Caco-2 (cell line): ENCODE measurements at regions of chr7 and their contacts with region 1.

Region 1: GRCh38 chr7:135645296-135645904 is 16.9 kb upstream of the STMP1 start:
- DNase-seq: peak in 1 of 2 experiments; percentile 37
- H3K4me3 ChIP-seq: no peak overlapping the region
- H3K4me3 Mint-ChIP-seq: no peak overlapping the region
- H3K27ac Mint-ChIP-seq: no peak overlapping the region
- H3K4me1 ChIP-seq: no peaks in the 10 kb centered on the region
- H3K4me1 Mint-ChIP-seq: no peaks in the 10 kb centered on the region
- H3K27me3 ChIP-seq: no peaks in the 10 kb centered on the region
- H3K27me3 Mint-ChIP-seq: no peaks in the 10 kb centered on the region
- CTCF ChIP-seq: peak; percentile 64 to 73

Region 2: GRCh38 chr7:135274495-135275268 is 370.7 kb before region 1 on chr7:
- CTCF ChIA-PET with region 1: interaction called, 11 read pairs
- POLR2A ChIA-PET with region 1: no interaction called
- intact Hi-C with region 1: no loop called
- DNase-seq: peak; percentile 56 to 78
- H3K4me3 ChIP-seq: no peak overlapping the region
- H3K4me3 Mint-ChIP-seq: no peak overlapping the region
- H3K27ac Mint-ChIP-seq: no peak overlapping the region
- H3K4me1 ChIP-seq: no peaks in the 10 kb centered on the region
- H3K4me1 Mint-ChIP-seq: no peaks in the 10 kb centered on the region
- H3K27me3 ChIP-seq: no peaks in the 10 kb centered on the region
- H3K27me3 Mint-ChIP-seq: no peaks in the 10 kb centered on the region
- CTCF ChIP-seq: peak; percentile 65 to 92

Region 3: GRCh38 chr7:135493362-135493761 is 152.0 kb before region 1 on chr7:
- CTCF ChIA-PET with region 1: interaction called, 10 read pairs
- POLR2A ChIA-PET with region 1: no interaction called
- intact Hi-C with region 1: no loop called
- DNase-seq: no peak
- H3K4me3 ChIP-seq: no peak overlapping the region
- H3K4me3 Mint-ChIP-seq: no peak overlapping the region
- H3K27ac Mint-ChIP-seq: no peak overlapping the region
- H3K4me1 ChIP-seq: no peaks in the 10 kb centered on the region
- H3K4me1 Mint-ChIP-seq: peaks cover 6% of the 10 kb centered on the region
- H3K27me3 ChIP-seq: no peaks in the 10 kb centered on the region
- H3K27me3 Mint-ChIP-seq: no peaks in the 10 kb centered on the region
- CTCF ChIP-seq: no peak

Region 4: DNA sequence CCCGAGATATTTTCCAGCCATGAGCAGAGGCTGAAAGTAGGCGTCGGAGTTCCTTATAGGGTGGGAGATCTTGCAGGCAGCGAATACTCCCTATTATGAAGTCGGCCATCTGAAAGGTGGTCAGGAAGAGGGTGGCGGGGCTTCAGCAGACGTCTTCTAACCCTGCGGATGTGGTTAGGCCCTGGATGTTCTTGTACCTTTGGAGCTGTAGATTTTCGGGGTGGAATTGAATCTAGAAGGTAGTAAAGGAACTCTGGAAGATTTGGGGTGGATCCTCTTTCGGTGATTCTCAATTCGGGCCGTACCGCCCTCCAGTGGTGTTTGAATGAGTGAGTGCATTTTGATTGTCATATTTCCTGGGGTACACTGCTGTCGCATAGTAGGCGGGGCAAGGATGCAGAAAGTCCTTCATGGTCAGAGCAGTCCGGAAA is 87.0 kb before region 1 on chr7:
- CTCF ChIA-PET with region 1: no interaction called
- POLR2A ChIA-PET with region 1: no interaction called
- intact Hi-C with region 1: no loop called
- DNase-seq: peak; percentile 72 to 74
- H3K4me3 ChIP-seq: peak overlapping the region; percentile 82
- H3K4me3 Mint-ChIP-seq: no peak overlapping the region
- H3K27ac Mint-ChIP-seq: no peak overlapping the region
- H3K4me1 ChIP-seq: peaks cover 28% of the 10 kb centered on the region
- H3K4me1 Mint-ChIP-seq: peaks cover 7% of the 10 kb centered on the region
- H3K27me3 ChIP-seq: no peaks in the 10 kb centered on the region
- H3K27me3 Mint-ChIP-seq: peaks cover 4% of the 10 kb centered on the region
- CTCF ChIP-seq: peak; percentile 45 to 51

Region 5: DNA sequence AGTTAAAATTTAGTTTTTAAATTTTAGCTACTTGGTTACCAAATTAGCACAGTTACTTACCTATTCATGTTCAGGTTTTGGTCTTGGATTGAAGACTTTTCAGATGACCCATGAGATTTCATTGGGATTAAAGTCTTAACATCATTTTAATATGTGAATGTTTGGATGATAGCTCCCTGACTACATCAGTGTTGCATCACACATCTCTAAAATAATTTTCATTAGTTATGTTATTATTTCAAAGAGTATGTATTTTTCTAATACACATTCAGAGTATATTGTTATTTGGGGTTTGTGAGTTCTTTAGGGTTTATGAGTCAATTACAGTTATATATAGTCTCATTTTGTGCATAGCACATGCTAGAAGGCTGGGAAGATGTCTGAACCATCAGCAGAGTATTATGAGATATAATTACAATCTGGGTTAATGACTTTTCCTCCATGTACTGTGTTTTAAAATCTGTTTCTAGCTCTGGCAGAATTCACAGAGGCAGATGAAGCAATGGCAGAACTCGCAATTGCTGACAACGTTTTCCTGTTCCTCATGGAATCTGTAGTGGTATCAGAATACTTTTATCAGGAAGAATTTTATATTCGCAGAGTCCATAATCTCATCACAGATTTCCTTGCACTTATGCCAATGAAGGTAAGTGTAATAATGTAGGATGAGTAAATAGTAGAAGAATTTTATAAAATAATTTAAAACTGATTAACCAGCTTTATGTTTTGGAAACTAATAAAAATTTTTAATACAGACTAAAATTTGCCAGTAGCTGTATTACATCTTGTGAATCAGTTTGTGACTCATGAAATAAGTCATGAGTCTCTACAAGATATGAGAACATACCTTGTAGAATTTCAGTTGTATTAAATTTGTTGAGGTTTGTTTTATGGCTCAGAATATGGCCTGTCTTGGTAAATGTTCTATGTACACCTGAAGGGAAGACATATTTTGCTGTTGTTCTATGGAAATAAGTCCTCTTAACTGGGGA is 60.7 kb before region 1 on chr7:
- CTCF ChIA-PET with region 1: no interaction called
- POLR2A ChIA-PET with region 1: no interaction called
- intact Hi-C with region 1: no loop called
- DNase-seq: no peak
- H3K4me3 ChIP-seq: no peak overlapping the region
- H3K4me3 Mint-ChIP-seq: no peak overlapping the region
- H3K27ac Mint-ChIP-seq: no peak overlapping the region
- H3K4me1 ChIP-seq: no peaks in the 10 kb centered on the region
- H3K4me1 Mint-ChIP-seq: no peaks in the 10 kb centered on the region
- H3K27me3 ChIP-seq: no peaks in the 10 kb centered on the region
- H3K27me3 Mint-ChIP-seq: no peaks in the 10 kb centered on the region
- CTCF ChIP-seq: no peak

Region 6: DNA sequence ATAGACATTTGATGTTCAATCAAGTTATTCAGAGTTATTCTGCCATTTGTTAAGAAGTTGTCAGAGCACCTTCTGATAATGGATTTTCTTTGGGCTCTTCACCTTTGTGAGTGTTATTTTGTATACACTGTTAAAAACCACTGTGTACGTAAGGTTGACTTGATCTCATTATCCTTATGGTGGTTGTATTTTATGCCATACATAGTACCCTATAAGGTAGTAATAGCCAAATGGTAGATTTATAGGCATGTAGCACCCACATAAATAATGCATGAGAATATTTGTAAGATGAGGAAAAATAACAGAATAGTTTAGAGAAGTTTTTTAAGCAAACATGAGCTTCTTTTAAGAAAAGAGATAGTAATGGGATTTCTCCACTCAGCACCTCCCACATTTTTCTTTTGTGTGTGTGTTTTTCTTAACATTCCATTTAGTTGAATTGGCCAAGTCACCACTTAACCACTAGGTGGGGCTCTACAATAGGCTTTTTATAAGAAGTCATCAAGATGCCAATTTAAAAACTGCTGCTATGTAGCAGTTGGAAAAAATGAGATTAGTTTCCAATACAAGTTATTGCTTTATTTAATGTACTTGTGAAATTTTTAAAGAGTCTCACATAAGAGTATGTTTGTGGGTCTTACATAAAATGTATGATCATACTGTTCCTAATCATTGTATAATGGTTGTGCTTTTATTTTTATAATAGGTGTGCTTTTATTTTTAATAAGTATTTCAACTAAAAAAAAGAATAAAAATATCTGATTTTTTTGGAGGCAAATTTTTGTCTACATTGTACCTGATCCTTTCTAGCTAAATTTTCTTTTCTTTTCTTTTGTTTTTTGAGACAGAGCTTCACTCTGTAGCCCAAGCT is 24.2 kb before region 1 on chr7:
- CTCF ChIA-PET with region 1: interaction called, 10 read pairs
- POLR2A ChIA-PET with region 1: no interaction called
- intact Hi-C with region 1: loop called (anchors 1 kb)
- DNase-seq: peak; percentile 48 to 63
- H3K4me3 ChIP-seq: no peak overlapping the region
- H3K4me3 Mint-ChIP-seq: no peak overlapping the region
- H3K27ac Mint-ChIP-seq: no peak overlapping the region
- H3K4me1 ChIP-seq: no peaks in the 10 kb centered on the region
- H3K4me1 Mint-ChIP-seq: no peaks in the 10 kb centered on the region
- H3K27me3 ChIP-seq: no peaks in the 10 kb centered on the region
- H3K27me3 Mint-ChIP-seq: no peaks in the 10 kb centered on the region
- CTCF ChIP-seq: peak; percentile 78 to 82

Region 7: GRCh38 chr7:135672560-135673359 is 27.4 kb after region 1 on chr7:
- CTCF ChIA-PET with region 1: no interaction called
- POLR2A ChIA-PET with region 1: no interaction called
- intact Hi-C with region 1: no loop called
- DNase-seq: peak in 1 of 2 experiments; percentile 41
- H3K4me3 ChIP-seq: no peak overlapping the region
- H3K4me3 Mint-ChIP-seq: no peak overlapping the region
- H3K27ac Mint-ChIP-seq: no peak overlapping the region
- H3K4me1 ChIP-seq: no peaks in the 10 kb centered on the region
- H3K4me1 Mint-ChIP-seq: no peaks in the 10 kb centered on the region
- H3K27me3 ChIP-seq: no peaks in the 10 kb centered on the region
- H3K27me3 Mint-ChIP-seq: no peaks in the 10 kb centered on the region
- CTCF ChIP-seq: peak; percentile 74 to 84